PC-3 (cell line): ENCODE measurements at regions of chr2 and their contacts with region 1.

Region 1: DNA sequence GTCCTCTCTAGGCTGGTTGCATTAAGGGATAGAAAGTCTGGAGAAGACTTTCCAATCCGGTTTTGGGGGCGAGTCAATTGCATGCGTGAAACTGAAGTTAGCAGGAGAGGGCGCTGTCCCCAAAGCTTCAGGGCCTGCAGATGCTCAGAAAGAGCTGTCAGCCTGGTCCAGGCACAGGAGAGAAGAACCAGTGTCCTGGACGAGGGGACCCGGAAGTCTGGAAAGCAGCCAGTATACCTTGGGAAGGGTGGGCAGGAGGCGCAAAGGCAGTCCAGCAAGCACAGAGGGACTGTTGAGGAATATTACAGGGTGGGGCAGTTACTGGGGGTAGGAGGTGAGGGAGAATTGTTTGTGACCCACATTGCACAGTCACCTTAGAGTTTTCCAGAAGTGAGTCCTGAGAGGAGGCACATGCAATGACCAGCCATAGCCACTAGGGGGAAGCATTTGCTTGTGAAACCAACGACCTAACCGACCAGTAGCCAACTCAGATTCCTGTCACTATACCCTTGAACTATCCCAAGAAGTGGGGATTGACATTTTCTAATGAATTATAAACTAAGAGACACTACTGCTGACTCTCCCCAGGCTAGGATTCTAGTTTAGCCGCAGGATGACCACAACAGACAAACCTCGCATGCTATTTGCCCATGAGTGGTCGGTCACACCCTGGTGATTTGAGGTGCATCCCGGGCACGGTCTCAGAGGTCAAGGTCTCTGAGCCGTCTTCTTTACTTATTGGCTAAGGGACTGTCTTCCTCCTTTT is 172.8 kb downstream of the RDH14 start:
- DNase-seq: peak; percentile 88
- ATAC-seq: peak; percentile 94
- H3K4me3 ChIP-seq: no peak overlapping the region
- H3K27ac ChIP-seq: no peak overlapping the region
- H3K4me1 ChIP-seq: no peaks in the 10 kb centered on the region
- H3K27me3 ChIP-seq: no peaks in the 10 kb centered on the region
- CTCF ChIP-seq: peak; percentile 95

Region 2: DNA sequence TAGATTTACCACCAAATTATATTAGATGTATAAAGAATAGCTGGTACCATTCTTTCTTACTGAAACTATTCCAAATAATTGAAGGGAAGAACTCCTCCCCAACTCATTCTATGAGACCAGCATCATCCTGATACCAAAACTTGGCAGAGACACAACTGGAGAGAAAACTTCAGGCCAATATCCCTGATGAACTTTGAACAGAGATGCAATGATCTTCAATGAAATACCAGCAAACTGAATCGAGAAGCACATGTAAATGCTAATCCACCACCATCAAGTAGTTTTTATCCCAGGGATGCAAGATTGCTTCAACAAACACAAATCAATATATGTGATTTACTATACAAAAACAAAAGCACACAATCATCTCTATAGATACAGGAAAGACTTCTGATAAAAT is 157.0 kb before region 1 on chr2:
- CTCF ChIA-PET with region 1: no interaction called
- POLR2A ChIA-PET with region 1: no interaction called
- intact Hi-C with region 1: no loop called
- DNase-seq: no peak
- ATAC-seq: no peak
- H3K4me3 ChIP-seq: no peak overlapping the region
- H3K27ac ChIP-seq: no peak overlapping the region
- H3K4me1 ChIP-seq: peaks cover 13% of the 10 kb centered on the region
- H3K27me3 ChIP-seq: peaks cover 4% of the 10 kb centered on the region; the same call in 1 of the 2 replicates
- CTCF ChIP-seq: no peak

Region 3: GRCh38 chr2:18413676-18414396 is 26.2 kb after region 1 on chr2:
- CTCF ChIA-PET with region 1: no interaction called
- POLR2A ChIA-PET with region 1: no interaction called
- intact Hi-C with region 1: loop called (anchors 1 kb)
- DNase-seq: peak; percentile 80
- ATAC-seq: peak; percentile 92
- H3K4me3 ChIP-seq: peak overlapping the region; percentile 11; the same call in 1 of the 2 replicates
- H3K27ac ChIP-seq: peak overlapping the region; percentile 61
- H3K4me1 ChIP-seq: peaks cover 18% of the 10 kb centered on the region
- H3K27me3 ChIP-seq: no peaks in the 10 kb centered on the region
- CTCF ChIP-seq: no peak